Common myeloid progenitor, CD34-positive (primary cell): ENCODE measurements at regions of chr11 and their contacts with region 1.

Region 1: GRCh38 chr11:1652771-1653540 is 23.4 kb downstream of the KRTAP5-5 start:
- DNase-seq: peak; percentile 56 to 77 (median 73)
- H3K4me3 ChIP-seq: peak overlapping the region in 1 of 7 experiments; percentile 48
- H3K27ac ChIP-seq: no peak overlapping the region
- H3K4me1 ChIP-seq: peaks cover 2 to 49% (median 41%) of the 10 kb centered on the region in 4 experiments
- H3K27me3 ChIP-seq: peaks cover 0 to 3% (median 0%) of the 10 kb centered on the region in 5 experiments

Region 2: GRCh38 chr11:1640076-1640946 is 12.6 kb before region 1 on chr11:
- CTCF ChIA-PET with region 1: interaction called, 45 read pairs
- POLR2A ChIA-PET with region 1: no interaction called
- DNase-seq: peak; percentile 22 to 27 (median 23)
- H3K4me3 ChIP-seq: no peak overlapping the region
- H3K27ac ChIP-seq: no peak overlapping the region
- H3K4me1 ChIP-seq: peaks cover 0 to 11% (median 5%) of the 10 kb centered on the region in 4 experiments
- H3K27me3 ChIP-seq: peaks cover 0 to 17% (median 7%) of the 10 kb centered on the region in 5 experiments

Region 3: DNA sequence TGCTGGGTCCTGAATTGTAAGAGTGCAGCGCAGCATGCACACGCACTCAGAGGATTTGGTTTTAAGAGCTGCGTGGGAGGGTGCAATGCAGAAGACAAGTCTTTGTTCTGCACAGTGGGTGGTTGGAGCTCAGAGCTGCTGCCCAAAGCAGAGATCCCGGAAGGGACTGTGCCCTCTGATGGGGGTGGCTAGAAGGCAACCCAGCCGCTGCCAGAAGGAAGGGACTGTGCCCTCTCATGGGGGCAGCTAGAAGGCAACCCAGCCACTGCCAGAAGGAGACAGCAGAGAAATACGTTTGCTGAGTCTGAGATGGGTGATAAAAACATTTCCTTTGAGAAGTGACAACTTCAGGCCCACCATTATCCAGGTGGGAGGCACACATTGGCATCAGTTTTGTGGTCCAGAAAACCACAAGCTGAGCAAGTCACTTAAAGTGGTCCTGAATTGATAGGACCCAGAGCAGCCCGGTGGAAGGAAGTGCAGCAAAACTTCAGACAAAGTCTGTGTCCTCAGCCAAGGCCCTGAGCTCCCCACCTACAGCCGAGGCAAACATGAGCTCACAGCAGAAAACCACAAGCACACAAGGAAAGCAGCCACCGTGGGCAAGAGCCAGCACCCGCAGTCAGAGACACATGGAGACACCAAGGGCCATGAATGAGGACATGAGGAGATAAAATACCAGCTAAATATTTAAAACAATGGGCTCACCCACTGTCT is 48.3 kb after region 1 on chr11:
- CTCF ChIA-PET with region 1: interaction called, 10 read pairs
- POLR2A ChIA-PET with region 1: no interaction called
- DNase-seq: peak in 2 of 3 donors; percentile 26 to 35
- H3K4me3 ChIP-seq: no peak overlapping the region
- H3K27ac ChIP-seq: no peak overlapping the region
- H3K4me1 ChIP-seq: peaks cover 0 to 13% (median 3%) of the 10 kb centered on the region in 4 experiments
- H3K27me3 ChIP-seq: no peaks in the 10 kb centered on the region

Region 4: DNA sequence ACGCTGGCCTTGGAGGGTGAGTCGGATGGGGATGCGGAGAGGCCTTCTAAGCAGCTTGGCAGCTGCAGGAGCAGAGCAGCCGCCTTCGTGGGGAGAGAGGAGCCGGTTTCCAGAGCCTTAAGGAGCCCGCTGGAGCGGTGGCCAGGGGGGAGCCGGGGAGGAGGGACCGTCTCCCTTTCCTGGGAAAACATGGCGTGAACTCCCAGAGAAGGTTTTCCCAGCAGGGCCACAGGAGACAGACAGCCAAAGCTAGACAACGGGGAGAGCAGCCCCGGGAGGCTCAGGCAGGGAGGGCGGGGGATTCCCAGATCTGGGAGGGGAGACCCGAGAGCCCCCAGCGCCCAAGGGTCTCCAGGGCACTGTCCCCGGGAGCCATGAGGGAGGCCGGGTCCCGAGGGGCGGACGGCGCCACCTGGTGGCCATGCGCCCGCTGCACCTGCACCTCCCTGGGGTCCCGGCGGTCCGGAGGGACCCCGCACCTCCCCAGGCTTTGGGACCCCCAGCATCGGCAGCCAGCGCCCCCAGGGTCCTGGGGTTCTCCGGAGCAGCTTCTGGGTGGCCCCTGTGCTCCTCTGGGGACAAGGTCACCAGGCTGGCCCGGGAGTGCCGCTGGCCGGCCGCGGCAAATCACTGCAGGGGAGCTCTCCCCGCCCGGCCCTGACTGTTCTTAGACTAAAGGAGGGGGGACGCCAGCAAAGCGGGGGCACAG is 179.4 kb after region 1 on chr11:
- CTCF ChIA-PET with region 1: interaction called, 135 read pairs
- POLR2A ChIA-PET with region 1: interaction called, 3 read pairs
- DNase-seq: peak in 2 of 3 donors; percentile 48 to 53
- H3K4me3 ChIP-seq: no peak overlapping the region
- H3K27ac ChIP-seq: no peak overlapping the region
- H3K4me1 ChIP-seq: peaks cover 0 to 16% (median 7%) of the 10 kb centered on the region in 4 experiments
- H3K27me3 ChIP-seq: peaks cover 0 to 13% (median 2%) of the 10 kb centered on the region in 5 experiments

Region 5: GRCh38 chr11:2002807-2003206 is 349.9 kb after region 1 on chr11:
- CTCF ChIA-PET with region 1: interaction called, 20 read pairs
- POLR2A ChIA-PET with region 1: no interaction called
- DNase-seq: no peak
- H3K4me3 ChIP-seq: no peak overlapping the region
- H3K27ac ChIP-seq: no peak overlapping the region
- H3K4me1 ChIP-seq: no peaks in the 10 kb centered on the region
- H3K27me3 ChIP-seq: no peaks in the 10 kb centered on the region